MCF 10A (cell line): ENCODE measurements at regions of chr2 and their contacts with region 1.

Region 1: DNA sequence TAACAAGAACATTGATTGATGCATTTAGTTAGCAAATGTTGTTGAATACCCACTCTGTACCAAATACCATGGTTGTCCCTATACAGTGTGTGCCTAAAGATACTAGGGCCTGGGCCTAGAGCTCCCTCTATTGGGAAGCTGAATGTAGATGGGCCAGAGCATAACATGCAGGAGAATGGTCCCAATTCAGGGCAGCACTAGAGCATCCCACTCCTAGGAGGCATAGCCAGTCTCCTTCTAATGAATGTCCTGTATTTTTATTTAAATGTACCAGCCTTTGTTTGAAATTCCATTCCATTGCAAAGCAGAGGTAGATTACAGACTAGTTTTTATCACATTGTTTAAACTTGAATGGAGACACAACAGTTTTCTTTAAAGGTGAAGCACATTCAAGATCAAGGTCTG is 90.6 kb downstream of the FEZ2 start:
- DNase-seq: peak; percentile 82
- H3K4me3 Mint-ChIP-seq: no peak overlapping the region
- H3K27ac Mint-ChIP-seq: peak overlapping the region; percentile 12
- H3K4me1 Mint-ChIP-seq: no peaks in the 10 kb centered on the region
- H3K27me3 Mint-ChIP-seq: no peaks in the 10 kb centered on the region
- CTCF ChIP-seq: peak; percentile 84

Region 2: DNA sequence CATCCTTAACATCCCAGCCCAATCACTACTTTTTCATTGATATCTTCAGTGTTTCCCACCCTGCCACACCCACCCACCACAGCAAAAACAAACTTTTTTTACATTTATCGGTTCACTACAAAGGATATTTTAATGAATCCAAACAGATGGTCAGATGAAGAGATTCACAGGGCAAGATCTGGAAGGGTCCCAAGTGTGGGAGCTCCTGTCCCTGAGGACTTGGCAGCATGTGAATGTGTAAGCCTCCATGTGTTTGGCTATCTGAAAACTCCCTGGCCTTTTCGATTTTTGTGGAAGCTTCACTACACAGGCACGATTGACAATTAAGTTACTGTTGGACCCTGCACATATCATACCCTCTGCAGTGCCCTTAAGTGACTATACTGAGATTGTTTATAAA is 200.0 kb before region 1 on chr2:
- CTCF ChIA-PET with region 1: no interaction called
- POLR2A ChIA-PET with region 1: no interaction called
- intact Hi-C with region 1: no loop called
- DNase-seq: no peak
- H3K4me3 Mint-ChIP-seq: no peak overlapping the region
- H3K27ac Mint-ChIP-seq: no peak overlapping the region
- H3K4me1 Mint-ChIP-seq: no peaks in the 10 kb centered on the region
- H3K27me3 Mint-ChIP-seq: peaks cover 62% of the 10 kb centered on the region
- CTCF ChIP-seq: no peak

Region 3: DNA sequence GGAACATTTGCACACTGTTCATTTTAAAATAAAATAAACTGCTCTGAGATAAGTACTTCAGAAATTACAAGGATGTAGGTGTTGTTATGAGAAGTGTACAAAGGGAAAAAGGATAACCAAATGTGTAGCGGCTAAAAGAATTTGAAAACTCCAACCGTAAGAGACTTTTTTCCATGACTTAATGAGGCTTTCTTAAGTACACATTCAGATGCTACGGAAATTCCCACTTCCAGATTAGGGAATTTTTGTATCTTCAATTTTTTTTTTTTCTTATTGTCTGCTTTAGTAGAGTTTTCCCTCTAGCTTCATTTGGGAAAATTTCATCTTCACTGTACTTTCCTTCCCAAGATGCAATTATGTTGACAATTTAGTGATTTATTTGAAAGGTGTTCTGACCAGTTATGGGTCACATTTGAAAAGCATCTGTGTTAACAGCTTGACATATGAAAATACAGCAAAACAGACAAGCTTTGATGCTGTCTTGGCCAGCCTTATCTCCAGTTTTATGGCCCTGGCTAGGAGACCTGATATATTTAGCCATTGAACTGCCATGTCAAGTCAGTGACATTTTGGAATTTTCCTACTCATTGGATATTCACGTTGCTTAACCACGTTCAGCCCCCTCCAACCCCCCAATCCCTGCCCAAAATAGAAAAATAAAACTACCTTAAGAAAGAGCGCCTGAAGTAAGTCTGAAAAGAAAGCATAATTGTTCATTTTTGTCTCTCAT is 15.0 kb before region 1 on chr2:
- CTCF ChIA-PET with region 1: interaction called, 10 read pairs
- POLR2A ChIA-PET with region 1: interaction called, 6 read pairs
- intact Hi-C with region 1: no loop called
- DNase-seq: no peak
- H3K4me3 Mint-ChIP-seq: no peak overlapping the region
- H3K27ac Mint-ChIP-seq: peak overlapping the region; percentile 58
- H3K4me1 Mint-ChIP-seq: peaks cover 23% of the 10 kb centered on the region
- H3K27me3 Mint-ChIP-seq: no peaks in the 10 kb centered on the region
- CTCF ChIP-seq: no peak

Region 4: GRCh38 chr2:36618028-36618780 is 110.8 kb after region 1 on chr2:
- CTCF ChIA-PET with region 1: no interaction called
- POLR2A ChIA-PET with region 1: no interaction called
- intact Hi-C with region 1: no loop called
- DNase-seq: peak; percentile 81
- H3K4me3 Mint-ChIP-seq: no peak overlapping the region
- H3K27ac Mint-ChIP-seq: no peak overlapping the region
- H3K4me1 Mint-ChIP-seq: peaks cover 10% of the 10 kb centered on the region
- H3K27me3 Mint-ChIP-seq: no peaks in the 10 kb centered on the region
- CTCF ChIP-seq: no peak